Endothelial cell of umbilical vein (primary cell): ENCODE measurements at regions of chr21 and their contacts with region 1.

Region 1: GRCh38 chr21:27759091-27759659 is 792.3 kb upstream of the ADAMTS5 start:
- DNase-seq: no peak
- H3K4me3 ChIP-seq: no peak overlapping the region
- H3K27ac ChIP-seq: no peak overlapping the region
- H3K4me1 ChIP-seq: no peaks in the 10 kb centered on the region
- H3K27me3 ChIP-seq: no peaks in the 10 kb centered on the region
- CTCF ChIP-seq: peak in 1 of 2 donors; percentile 46
- POLR2A ChIP-seq: no peak

Region 2: DNA sequence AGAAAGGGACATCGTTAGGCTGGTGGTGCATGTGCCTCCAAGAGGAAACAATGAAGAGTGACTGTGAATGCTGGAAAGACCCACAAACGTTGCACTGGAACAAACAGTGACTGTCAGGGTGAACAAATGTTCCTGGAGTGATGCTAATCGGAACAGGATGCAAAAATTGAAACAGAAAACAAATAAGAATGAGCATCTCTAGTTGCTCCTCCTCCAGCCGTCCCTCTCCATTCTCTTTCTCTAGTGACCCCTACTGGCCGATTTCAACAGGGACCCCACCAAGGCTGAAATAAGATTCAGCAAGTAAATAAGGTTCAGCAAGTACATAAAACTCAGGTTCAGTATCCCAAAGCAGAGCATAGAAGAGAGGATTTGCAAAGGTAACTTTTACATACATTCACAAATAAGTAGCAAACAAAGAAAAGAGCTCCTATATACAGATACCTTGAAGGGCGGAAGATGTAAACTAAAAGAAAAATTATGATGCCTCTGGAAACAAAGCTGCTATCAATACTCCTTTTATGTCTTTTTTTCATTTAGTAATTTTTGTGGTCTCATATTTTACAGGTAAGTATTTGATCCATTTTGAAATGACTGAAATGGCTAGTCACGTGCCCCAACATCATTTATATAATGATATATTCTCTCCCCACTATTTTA is 43.8 kb after region 1 on chr21:
- CTCF ChIA-PET with region 1: interaction called, 6 read pairs
- POLR2A ChIA-PET with region 1: no interaction called
- dilution Hi-C with region 1: no loop called
- intact Hi-C with region 1: loop called (anchors 2 kb)
- DNase-seq: peak; percentile 39
- H3K4me3 ChIP-seq: no peak overlapping the region
- H3K27ac ChIP-seq: no peak overlapping the region
- H3K4me1 ChIP-seq: no peaks in the 10 kb centered on the region
- H3K27me3 ChIP-seq: no peaks in the 10 kb centered on the region
- CTCF ChIP-seq: peak; percentile 55 to 65
- POLR2A ChIP-seq: no peak

Region 3: GRCh38 chr21:27831816-27832569 is 72.8 kb after region 1 on chr21:
- CTCF ChIA-PET with region 1: no interaction called
- POLR2A ChIA-PET with region 1: no interaction called
- dilution Hi-C with region 1: no loop called
- intact Hi-C with region 1: no loop called
- DNase-seq: no peak
- H3K4me3 ChIP-seq: no peak overlapping the region
- H3K27ac ChIP-seq: no peak overlapping the region
- H3K4me1 ChIP-seq: no peaks in the 10 kb centered on the region
- H3K27me3 ChIP-seq: no peaks in the 10 kb centered on the region
- CTCF ChIP-seq: no peak
- POLR2A ChIP-seq: no peak